Transverse colon (tissue), 4 donors: ENCODE measurements at regions of chr17 and their contacts with region 1.

Region 1: DNA sequence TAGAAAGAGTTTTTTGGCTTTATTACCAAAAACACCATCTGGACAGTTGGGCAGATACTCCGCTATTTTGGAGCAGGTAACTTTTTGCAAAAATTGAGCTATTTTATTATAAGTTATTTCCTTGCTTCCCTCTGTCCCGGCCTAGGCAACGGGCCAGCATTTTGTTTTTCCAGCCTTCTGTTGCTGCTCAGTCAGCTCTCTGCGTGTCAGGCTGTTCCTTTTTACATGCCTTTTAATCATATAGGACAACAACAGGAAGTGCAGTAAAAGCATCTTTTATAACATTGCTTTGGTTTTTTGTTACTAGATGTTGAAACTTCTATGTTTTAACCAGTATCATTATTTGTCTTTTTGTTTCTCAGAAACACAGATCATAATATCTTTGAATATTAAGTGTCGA is 30.4 kb downstream of the PPM1D start:
- DNase-seq: peak; percentile 15
- H3K4me3 ChIP-seq: no peak overlapping the region
- H3K27ac ChIP-seq: no peak overlapping the region
- H3K4me1 ChIP-seq: no peaks in the 10 kb centered on the region
- H3K27me3 ChIP-seq: no peaks in the 10 kb centered on the region
- CTCF ChIP-seq: no peak
- EP300 ChIP-seq: no peak
- POLR2A ChIP-seq: no peak

Region 2: GRCh38 chr17:60577147-60577915 is 53.0 kb before region 1 on chr17:
- in situ Hi-C with region 1: loop called in 3 of 4 experiments (anchors 10 kb)
- intact Hi-C with region 1: no loop called
- DNase-seq: peak; percentile 25
- H3K4me3 ChIP-seq: peak overlapping the region in 3 of 4 donors; percentile 24 to 54 (median 38)
- H3K27ac ChIP-seq: peak overlapping the region; percentile 71 to 82 (median 78)
- H3K4me1 ChIP-seq: peaks cover 0 to 24% (median 13%) of the 10 kb centered on the region in 4 donors
- H3K27me3 ChIP-seq: no peaks in the 10 kb centered on the region
- CTCF ChIP-seq: peak in 1 of 5 experiments; percentile 9
- EP300 ChIP-seq: no peak
- POLR2A ChIP-seq: no peak

Region 3: GRCh38 chr17:60586288-60586974 is 43.9 kb before region 1 on chr17:
- in situ Hi-C with region 1: loop called in 1 of 4 experiments (anchors 10 kb)
- intact Hi-C with region 1: no loop called
- DNase-seq: no peak
- H3K4me3 ChIP-seq: no peak overlapping the region
- H3K27ac ChIP-seq: no peak overlapping the region
- H3K4me1 ChIP-seq: no peaks in the 10 kb centered on the region
- H3K27me3 ChIP-seq: no peaks in the 10 kb centered on the region
- CTCF ChIP-seq: no peak
- EP300 ChIP-seq: no peak
- POLR2A ChIP-seq: no peak

Region 4: GRCh38 chr17:60724647-60725046 is 94.3 kb after region 1 on chr17:
- in situ Hi-C with region 1: no loop called
- intact Hi-C with region 1: no loop called
- DNase-seq: no peak
- H3K4me3 ChIP-seq: no peak overlapping the region
- H3K27ac ChIP-seq: no peak overlapping the region
- H3K4me1 ChIP-seq: peaks cover 0 to 8% (median 0%) of the 10 kb centered on the region in 4 donors
- H3K27me3 ChIP-seq: no peaks in the 10 kb centered on the region
- CTCF ChIP-seq: no peak
- EP300 ChIP-seq: no peak
- POLR2A ChIP-seq: no peak